CD8-positive, alpha-beta T cell (primary cell): ENCODE measurements at regions of chr9 and their contacts with region 1.

Region 1: GRCh38 chr9:32456564-32456963 is 69.4 kb downstream of the RIGI start:
- DNase-seq: no peak
- ATAC-seq: no peak
- H3K4me3 ChIP-seq: no peak overlapping the region
- H3K4me3 Mint-ChIP-seq: no peak overlapping the region
- H3K27ac ChIP-seq: no peak overlapping the region
- H3K27ac Mint-ChIP-seq: peak overlapping the region; percentile 41
- H3K4me1 ChIP-seq: no peaks in the 10 kb centered on the region
- H3K4me1 Mint-ChIP-seq: no peaks in the 10 kb centered on the region
- H3K27me3 ChIP-seq: no peaks in the 10 kb centered on the region
- H3K27me3 Mint-ChIP-seq: no peaks in the 10 kb centered on the region
- CTCF ChIP-seq: no peak

Region 2: DNA sequence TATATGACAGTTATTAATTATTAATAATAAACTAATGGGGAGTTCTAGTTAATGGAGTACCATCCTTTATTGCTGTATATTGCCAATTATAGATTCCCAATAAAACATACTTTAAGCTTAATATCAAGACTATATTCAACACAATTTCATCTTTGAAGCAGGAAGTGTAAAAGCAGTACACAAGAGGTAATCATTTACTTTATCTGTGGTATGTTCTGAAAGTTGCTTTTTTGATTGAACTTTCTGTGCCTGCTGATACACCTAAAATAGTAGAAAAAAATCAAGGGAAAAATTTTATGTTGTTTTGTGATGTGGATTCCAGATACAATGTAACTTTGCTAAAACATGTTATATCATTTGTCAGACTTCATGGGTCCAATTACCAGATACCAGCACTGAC is 14.1 kb before region 1 on chr9:
- CTCF ChIA-PET with region 1: interaction called, 3 read pairs
- POLR2A ChIA-PET with region 1: interaction called, 3 read pairs
- intact Hi-C with region 1: loop called in 1 of 2 experiments (anchors 1 kb)
- DNase-seq: no peak
- ATAC-seq: no peak
- H3K4me3 ChIP-seq: no peak overlapping the region
- H3K4me3 Mint-ChIP-seq: no peak overlapping the region
- H3K27ac ChIP-seq: no peak overlapping the region
- H3K27ac Mint-ChIP-seq: no peak overlapping the region
- H3K4me1 ChIP-seq: no peaks in the 10 kb centered on the region
- H3K4me1 Mint-ChIP-seq: no peaks in the 10 kb centered on the region
- H3K27me3 ChIP-seq: no peaks in the 10 kb centered on the region
- H3K27me3 Mint-ChIP-seq: no peaks in the 10 kb centered on the region
- CTCF ChIP-seq: no peak